ENCODE measurements at regions of chr6 and their contacts with region 1.

Region 1: DNA sequence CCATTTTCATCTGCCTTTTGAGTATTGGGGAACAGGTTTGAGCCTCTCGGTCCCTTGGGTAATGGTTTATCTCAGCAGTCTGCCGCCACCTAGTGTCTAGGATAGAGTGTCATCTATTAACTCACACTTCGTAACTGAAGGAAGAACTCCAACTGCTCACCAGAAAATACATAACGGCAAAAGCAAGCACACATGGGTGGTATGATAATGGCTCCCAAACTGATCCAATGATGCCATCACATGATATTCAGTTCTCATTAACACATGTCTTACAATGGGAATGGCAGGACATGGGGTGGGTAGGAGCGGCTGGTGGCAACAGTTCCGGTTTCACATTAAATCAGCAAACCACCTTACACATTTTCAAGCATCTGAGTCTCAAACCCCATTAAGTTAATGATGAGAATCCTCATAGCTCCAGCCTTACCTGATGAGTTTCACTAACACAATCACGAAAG is 110.7 kb upstream of the PHACTR1 start:
- DNase-seq: no peak

Region 2: DNA sequence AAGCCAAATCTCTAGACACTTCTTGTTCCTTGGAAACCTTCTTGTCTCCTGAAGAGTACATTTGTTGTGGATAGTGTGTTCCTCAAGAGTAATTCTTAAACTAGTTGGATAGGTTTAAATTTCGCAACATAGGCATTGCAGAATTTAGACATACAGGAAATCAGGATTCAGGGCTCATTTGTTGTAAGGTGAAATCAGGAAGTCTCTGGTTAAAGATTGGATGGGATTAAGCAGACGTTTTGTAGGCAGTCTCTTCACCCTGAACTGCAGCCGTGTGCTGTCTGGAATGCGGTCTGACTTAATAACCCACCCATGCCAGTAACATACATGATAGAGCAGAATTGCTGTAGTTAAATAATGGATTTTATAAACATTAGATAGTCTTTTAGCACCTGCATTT is 572.1 kb before region 1 on chr6:
- intact Hi-C with region 1: no loop called
- DNase-seq: no peak

Region 3: DNA sequence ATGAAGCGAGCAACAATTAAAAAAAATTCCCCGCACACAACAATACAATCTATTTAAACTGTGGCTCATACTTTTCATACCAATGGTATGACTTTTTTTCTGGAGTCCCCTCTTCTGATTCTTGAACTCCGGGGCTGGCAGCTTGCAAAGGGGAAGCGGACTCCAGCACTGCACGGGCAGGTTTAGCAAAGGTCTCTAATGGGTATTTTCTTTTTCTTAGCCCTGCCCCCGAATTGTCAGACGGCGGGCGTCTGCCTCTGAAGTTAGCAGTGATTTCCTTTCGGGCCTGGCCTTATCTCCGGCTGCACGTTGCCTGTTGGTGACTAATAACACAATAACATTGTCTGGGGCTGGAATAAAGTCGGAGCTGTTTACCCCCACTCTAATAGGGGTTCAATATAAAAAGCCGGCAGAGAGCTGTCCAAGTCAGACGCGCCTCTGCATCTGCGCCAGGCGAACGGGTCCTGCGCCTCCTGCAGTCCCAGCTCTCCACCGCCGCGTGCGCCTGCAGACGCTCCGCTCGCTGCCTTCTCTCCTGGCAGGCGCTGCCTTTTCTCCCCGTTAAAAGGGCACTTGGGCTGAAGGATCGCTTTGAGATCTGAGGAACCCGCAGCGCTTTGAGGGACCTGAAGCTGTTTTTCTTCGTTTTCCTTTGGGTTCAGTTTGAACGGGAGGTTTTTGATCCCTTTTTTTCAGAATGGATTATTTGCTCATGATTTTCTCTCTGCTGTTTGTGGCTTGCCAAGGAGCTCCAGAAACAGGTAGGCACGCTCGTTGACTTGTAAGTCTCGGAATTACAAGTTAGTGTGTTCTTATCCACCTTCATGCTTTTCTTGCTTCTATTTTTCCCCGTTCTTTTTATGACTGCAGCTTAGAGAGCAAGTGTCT is 315.7 kb before region 1 on chr6 and contains the start of gene EDN1:
- intact Hi-C with region 1: loop called in 1 of 2 experiments (anchors 10 kb)
- DNase-seq: peak; percentile 92
- total RNA-seq, gene EDN1: 4.0 to 7.2 TPM

Region 4: DNA sequence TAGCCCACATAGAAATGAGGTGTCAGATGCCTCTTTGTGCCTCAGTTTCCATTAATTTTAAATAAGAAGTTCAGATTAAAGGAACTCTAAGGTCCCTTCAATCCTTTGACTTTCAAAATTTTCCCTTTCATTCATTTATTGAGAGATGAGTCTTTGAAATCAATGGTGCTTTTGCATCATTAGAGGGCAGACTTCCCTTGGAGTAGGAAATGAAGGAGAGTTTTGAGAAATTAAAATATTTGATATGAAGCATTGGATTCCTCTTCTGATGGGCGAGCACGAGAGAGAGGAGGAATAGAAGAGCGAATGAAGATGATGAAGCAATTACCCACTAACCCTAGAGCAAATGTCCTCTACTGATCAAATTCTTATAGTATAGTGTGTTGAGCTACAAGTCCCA is 210.0 kb before region 1 on chr6:
- intact Hi-C with region 1: loop called in 1 of 2 experiments (anchors 10 kb)
- DNase-seq: no peak